ENCODE measurements at regions of chr15 and their contacts with region 1.

Region 1: GRCh38 chr15:49145651-49146609 is 9.5 kb downstream of the COPS2 start:
- DNase-seq: peak; percentile 71
- H3K4me3 ChIP-seq: no peak overlapping the region
- H3K27ac ChIP-seq: no peak overlapping the region
- H3K4me1 ChIP-seq: peaks cover 31% of the 10 kb centered on the region
- H3K27me3 ChIP-seq: no peaks in the 10 kb centered on the region
- CTCF ChIP-seq: peak; percentile 90

Region 2: GRCh38 chr15:49135893-49136292 is 10.0 kb before region 1 on chr15:
- CTCF ChIA-PET with region 1: interaction called, 6 read pairs
- POLR2A ChIA-PET with region 1: interaction called, 21 read pairs
- intact Hi-C with region 1: no loop called
- DNase-seq: no peak
- H3K4me3 ChIP-seq: no peak overlapping the region
- H3K27ac ChIP-seq: no peak overlapping the region
- H3K4me1 ChIP-seq: peaks cover 10% of the 10 kb centered on the region
- H3K27me3 ChIP-seq: no peaks in the 10 kb centered on the region
- CTCF ChIP-seq: no peak

Region 3: DNA sequence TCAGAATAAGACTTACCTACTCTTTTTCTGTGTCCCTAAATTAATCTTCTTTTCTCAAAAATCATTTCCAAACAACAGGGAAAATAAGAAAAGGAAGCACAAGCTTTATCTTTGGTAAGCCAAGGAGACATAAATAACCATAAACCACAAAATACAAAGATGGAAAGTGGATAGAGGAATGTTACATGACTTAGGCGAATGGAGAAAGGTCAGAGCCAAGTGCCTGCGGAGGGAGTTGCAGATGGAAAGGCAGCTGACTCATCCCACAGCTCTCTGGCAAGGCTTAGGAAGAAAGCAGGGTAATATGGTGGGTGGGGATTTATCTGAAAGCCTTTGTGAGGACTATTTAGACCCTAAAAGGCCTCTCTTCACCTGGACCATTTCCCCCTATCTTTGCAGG is 96.9 kb after region 1 on chr15:
- CTCF ChIA-PET with region 1: no interaction called
- POLR2A ChIA-PET with region 1: no interaction called
- intact Hi-C with region 1: no loop called
- DNase-seq: no peak
- H3K4me3 ChIP-seq: no peak overlapping the region
- H3K27ac ChIP-seq: no peak overlapping the region
- H3K4me1 ChIP-seq: peaks cover 12% of the 10 kb centered on the region
- H3K27me3 ChIP-seq: no peaks in the 10 kb centered on the region
- CTCF ChIP-seq: no peak

Region 4: DNA sequence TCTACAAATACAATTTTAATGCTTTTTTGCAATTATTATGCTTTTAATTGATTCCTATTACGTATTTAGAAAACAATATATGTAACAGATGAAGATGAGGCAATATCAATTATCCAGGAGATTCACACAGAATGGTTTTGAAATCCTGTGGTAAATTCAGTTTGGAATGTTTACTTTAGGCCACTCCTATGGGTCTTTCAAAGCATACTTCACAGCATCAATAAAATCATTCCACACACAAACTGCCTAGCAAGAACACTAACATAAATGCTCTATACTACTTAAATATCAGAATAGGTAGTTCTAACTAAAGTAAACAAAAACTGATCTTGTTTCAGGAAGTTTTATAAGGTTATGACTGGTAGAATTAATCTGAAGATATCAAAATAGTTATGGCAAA is 384.2 kb after region 1 on chr15:
- CTCF ChIA-PET with region 1: no interaction called
- POLR2A ChIA-PET with region 1: no interaction called
- intact Hi-C with region 1: no loop called
- DNase-seq: no peak
- H3K4me3 ChIP-seq: no peak overlapping the region
- H3K27ac ChIP-seq: no peak overlapping the region
- H3K4me1 ChIP-seq: no peaks in the 10 kb centered on the region
- H3K27me3 ChIP-seq: no peaks in the 10 kb centered on the region
- CTCF ChIP-seq: no peak